ENCODE measurements at regions of chr2 and their contacts with region 1.

Region 1: DNA sequence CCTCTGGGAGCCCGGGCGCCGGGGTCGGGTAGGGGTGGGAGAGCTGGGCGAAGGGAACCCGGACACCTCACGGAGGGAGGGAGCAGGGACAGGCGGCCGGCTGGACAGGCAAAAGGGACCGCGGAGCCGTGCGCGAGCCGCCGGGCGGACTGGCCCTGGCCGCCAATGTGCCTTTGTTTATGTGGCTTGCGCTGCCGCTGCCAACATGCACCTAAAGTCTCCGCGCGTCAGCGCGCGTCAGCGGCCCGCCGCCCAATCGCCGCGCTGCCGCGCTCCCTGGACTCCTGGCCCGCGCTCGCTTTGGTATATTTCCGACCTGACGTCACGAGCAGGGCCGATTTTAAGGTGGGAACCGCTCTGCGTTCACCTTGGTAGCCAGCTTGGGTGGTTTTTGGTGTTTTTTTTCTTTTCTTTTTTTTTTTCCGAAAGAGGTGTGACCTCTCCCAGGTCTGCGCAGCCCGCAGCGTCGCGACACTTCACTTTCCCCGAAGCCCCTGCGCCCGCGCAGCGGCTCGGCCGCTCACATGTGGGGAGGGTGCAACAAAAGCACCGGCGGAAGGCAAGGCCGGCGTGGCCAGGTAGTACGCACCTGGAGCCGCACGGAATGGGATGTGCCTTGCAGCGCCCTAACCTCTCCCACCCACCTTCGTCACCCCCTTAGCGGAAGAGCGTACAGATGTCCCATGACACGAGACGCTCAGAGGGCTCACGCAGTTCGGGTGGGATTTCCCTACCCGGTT is at the start of gene NR4A2:
- DNase-seq: no peak
- H3K4me3 ChIP-seq: peak within 1 kb of the TSS; percentile 79
- H3K27ac ChIP-seq: peak within 1 kb of the TSS; percentile 99
- H3K27me3 ChIP-seq: peaks cover 4% of the 10 kb centered on the region
- CTCF ChIP-seq: no peak
- polyA plus RNA-seq, gene NR4A2: 0.93 and 1.0 TPM in 2 replicates

Region 2: GRCh38 chr2:156347431-156347830 is 14.7 kb after region 1 on chr2:
- CTCF ChIA-PET with region 1: interaction called, 12 read pairs
- POLR2A ChIA-PET with region 1: interaction called, 4 read pairs
- DNase-seq: no peak
- H3K4me3 ChIP-seq: no peak overlapping the region
- H3K27ac ChIP-seq: no peak overlapping the region
- H3K27me3 ChIP-seq: no peaks in the 10 kb centered on the region
- CTCF ChIP-seq: no peak

Region 3: GRCh38 chr2:156430980-156431358 is 98.3 kb after region 1 on chr2:
- CTCF ChIA-PET with region 1: interaction called, 28 read pairs
- POLR2A ChIA-PET with region 1: interaction called, 4 read pairs
- DNase-seq: no peak
- H3K4me3 ChIP-seq: no peak overlapping the region
- H3K27ac ChIP-seq: no peak overlapping the region
- H3K27me3 ChIP-seq: no peaks in the 10 kb centered on the region
- CTCF ChIP-seq: no peak

Region 4: GRCh38 chr2:156553714-156554442 is 221.2 kb after region 1 on chr2:
- CTCF ChIA-PET with region 1: interaction called, 10 read pairs
- POLR2A ChIA-PET with region 1: no interaction called
- DNase-seq: no peak
- H3K4me3 ChIP-seq: no peak overlapping the region
- H3K27ac ChIP-seq: no peak overlapping the region
- H3K27me3 ChIP-seq: no peaks in the 10 kb centered on the region
- CTCF ChIP-seq: no peak

Region 5: GRCh38 chr2:156589381-156590079 is 256.8 kb after region 1 on chr2:
- CTCF ChIA-PET with region 1: interaction called, 159 read pairs
- POLR2A ChIA-PET with region 1: interaction called, 5 read pairs
- DNase-seq: peak; percentile 11
- H3K4me3 ChIP-seq: no peak overlapping the region
- H3K27ac ChIP-seq: no peak overlapping the region
- H3K27me3 ChIP-seq: no peaks in the 10 kb centered on the region
- CTCF ChIP-seq: peak; percentile 68

Region 6: GRCh38 chr2:157194097-157194688 is 861.5 kb after region 1 on chr2:
- CTCF ChIA-PET with region 1: interaction called, 28 read pairs
- POLR2A ChIA-PET with region 1: no interaction called
- DNase-seq: no peak
- H3K4me3 ChIP-seq: no peak overlapping the region
- H3K27ac ChIP-seq: no peak overlapping the region
- H3K27me3 ChIP-seq: no peaks in the 10 kb centered on the region
- CTCF ChIP-seq: peak; percentile 75